MCF 10A (cell line): ENCODE measurements at regions of chr3 and their contacts with region 1.

Region 1: GRCh38 chr3:73100741-73101559 is 39.5 kb downstream of the EBLN2 start:
- DNase-seq: peak; percentile 85
- H3K4me3 Mint-ChIP-seq: no peak overlapping the region
- H3K27ac Mint-ChIP-seq: no peak overlapping the region
- H3K4me1 Mint-ChIP-seq: no peaks in the 10 kb centered on the region
- H3K27me3 Mint-ChIP-seq: no peaks in the 10 kb centered on the region
- CTCF ChIP-seq: peak; percentile 88

Region 2: DNA sequence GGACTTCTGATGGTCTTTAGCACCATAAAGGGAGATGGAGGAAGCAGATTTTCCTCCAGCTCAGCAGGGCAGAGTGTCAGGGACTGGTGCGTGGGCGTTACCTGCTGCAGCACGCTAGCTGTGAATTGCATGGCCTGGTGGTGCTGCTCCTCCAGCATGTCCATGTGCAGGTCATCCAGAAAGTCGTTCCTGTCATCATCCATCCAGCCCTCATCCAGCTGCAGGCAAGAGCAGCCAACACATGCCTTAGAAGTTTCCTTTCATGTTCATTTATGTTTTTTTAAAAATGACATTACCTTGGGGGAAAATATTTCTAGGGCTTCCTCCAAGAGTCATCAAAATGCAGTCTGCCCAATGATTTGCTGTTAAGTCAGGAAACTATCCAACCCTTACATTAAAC is 284.6 kb after region 1 on chr3:
- CTCF ChIA-PET with region 1: interaction called, 13 read pairs
- POLR2A ChIA-PET with region 1: no interaction called
- intact Hi-C with region 1: no loop called
- DNase-seq: no peak
- H3K4me3 Mint-ChIP-seq: no peak overlapping the region
- H3K27ac Mint-ChIP-seq: no peak overlapping the region
- H3K4me1 Mint-ChIP-seq: no peaks in the 10 kb centered on the region
- H3K27me3 Mint-ChIP-seq: no peaks in the 10 kb centered on the region
- CTCF ChIP-seq: no peak

Region 3: DNA sequence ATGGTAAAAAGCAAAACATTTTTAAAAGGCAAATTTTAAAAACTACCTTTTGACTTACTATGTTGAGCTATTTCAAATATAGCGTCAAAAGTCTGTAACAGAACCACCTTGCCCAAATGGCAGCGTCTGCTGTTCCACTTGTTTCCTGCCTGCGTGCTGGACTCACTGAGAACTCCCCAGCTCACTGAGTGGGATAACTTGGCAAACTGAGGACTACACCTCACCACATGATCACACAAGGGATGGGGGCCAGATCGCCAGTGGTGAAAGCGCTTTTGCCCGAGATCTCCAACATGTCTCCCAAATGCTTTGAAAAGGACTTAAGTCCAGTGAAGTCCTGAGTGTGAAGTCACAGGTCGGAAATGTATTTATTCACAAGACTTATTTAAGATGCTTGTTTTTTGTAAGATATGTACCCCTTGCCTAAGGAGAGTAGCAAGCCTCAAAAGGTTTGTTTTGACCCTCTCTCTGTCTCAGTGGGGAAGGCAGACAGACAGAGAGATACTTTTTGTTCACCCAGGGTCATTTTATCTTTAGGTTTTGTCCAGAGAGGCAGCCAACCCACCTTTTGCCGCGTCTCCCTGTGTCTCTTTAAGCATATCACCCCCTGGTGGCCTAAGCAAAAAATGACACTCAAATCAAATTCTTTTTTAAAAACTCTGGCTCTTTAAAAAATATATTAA is 331.2 kb after region 1 on chr3:
- CTCF ChIA-PET with region 1: interaction called, 135 read pairs
- POLR2A ChIA-PET with region 1: interaction called, 3 read pairs
- intact Hi-C with region 1: loop called (anchors 1 kb)
- DNase-seq: peak; percentile 66
- H3K4me3 Mint-ChIP-seq: no peak overlapping the region
- H3K27ac Mint-ChIP-seq: no peak overlapping the region
- H3K4me1 Mint-ChIP-seq: no peaks in the 10 kb centered on the region
- H3K27me3 Mint-ChIP-seq: peaks cover 55% of the 10 kb centered on the region
- CTCF ChIP-seq: peak; percentile 46